PC-9 (cell line): ENCODE measurements at regions of chr17 and their contacts with region 1.

Region 1: GRCh38 chr17:5986644-5987043 is 83.5 kb upstream of the WSCD1 start:
- DNase-seq: no peak
- H3K4me3 ChIP-seq: no peak overlapping the region
- H3K27ac ChIP-seq: no peak overlapping the region
- H3K4me1 ChIP-seq: no peaks in the 10 kb centered on the region
- H3K27me3 ChIP-seq: peaks cover 54% of the 10 kb centered on the region
- CTCF ChIP-seq: no peak

Region 2: DNA sequence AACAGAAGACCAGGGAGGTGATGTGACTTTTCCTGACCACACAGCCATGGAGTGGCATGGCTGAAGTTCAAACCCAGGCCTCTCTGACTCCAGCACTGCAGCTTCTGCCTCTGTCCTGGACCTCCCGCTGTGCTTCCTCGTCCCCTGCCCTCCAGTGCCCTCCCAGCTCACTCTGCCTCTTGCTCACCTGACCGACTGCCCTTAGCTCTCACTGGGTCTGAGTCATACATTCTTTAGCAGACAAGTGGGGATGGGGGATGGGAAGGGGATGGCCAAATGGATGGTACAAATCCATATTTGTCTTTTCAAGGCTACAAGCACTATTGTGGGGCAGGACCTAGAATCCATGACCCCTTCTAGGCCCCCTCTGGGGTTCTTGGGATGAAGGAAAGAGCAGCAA is 536.7 kb after region 1 on chr17:
- CTCF ChIA-PET with region 1: no interaction called
- POLR2A ChIA-PET with region 1: interaction called, 13 read pairs
- intact Hi-C with region 1: no loop called
- DNase-seq: peak; percentile 85 to 91
- H3K4me3 ChIP-seq: no peak overlapping the region
- H3K27ac ChIP-seq: peak overlapping the region; percentile 74
- H3K4me1 ChIP-seq: peaks cover 41% of the 10 kb centered on the region
- H3K27me3 ChIP-seq: no peaks in the 10 kb centered on the region
- CTCF ChIP-seq: no peak